Endothelial cell of umbilical vein (primary cell): ENCODE measurements at regions of chr17 and their contacts with region 1.

Region 1: DNA sequence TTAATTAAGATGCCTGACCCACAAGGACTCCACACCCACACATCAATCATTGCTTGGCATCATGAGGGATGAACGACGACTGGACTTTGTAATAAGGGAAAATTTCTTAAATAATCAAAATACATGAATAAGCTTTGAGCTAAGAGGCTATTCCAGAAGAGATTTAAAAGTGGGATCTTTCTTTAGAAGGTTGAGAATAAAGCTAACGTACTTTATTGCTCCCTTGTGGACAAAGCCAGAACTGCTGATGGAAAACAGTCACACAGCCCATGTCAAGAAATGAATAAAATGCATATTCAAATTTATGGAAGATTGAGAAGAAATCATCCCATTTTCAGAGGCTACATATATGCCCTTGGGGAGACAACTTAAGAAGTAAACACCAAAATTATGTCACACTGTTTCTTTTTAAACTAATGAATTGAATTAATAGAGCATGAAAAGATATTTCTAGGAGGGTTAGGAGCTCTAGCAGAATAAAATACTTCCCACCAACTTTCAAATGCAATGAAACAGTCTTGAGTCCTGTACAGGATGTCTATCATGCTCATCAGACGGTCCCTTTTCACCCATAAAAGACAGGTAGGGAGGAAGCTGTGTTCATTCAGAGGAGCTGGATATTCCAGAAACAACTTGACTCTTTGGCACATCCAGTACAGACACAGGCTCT is 60.2 kb upstream of the PHOSPHO1 start:
- DNase-seq: peak; percentile 65
- H3K4me3 ChIP-seq: no peak overlapping the region
- H3K27ac ChIP-seq: no peak overlapping the region
- H3K4me1 ChIP-seq: no peaks in the 10 kb centered on the region
- H3K27me3 ChIP-seq: no peaks in the 10 kb centered on the region
- CTCF ChIP-seq: peak; percentile 55 to 63
- POLR2A ChIP-seq: no peak

Region 2: DNA sequence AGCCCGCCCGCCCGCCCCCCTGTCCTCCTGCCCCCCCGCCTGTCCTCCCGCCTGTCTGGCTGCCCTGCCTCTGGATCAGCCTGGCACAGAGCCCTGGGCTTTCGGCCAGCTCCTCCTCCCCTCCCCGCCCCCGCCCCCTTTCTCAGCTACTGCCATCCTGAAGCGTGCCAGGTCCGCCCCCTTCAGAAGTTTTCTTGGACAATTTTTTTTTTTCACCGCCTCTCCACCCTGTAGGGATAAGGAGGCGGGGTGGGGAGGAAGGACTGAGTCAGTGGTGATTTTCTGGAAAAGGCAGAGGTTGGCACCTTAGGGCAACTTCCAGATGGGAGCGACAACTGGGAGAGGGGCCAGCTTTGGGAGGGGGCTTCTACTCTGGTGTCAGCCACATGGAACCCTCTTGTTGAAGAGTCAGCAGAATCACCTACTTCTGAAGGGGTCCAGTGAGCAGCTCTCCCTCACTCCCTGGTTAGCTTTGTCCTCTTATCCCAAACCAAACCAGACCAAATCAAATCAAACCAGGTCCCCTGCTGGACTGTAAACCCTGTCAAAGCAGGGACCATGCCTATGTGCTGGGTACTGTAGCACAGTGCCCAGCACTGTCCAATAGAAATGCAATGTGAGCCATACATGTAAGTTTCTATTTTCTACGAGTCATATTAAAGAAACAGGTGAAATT is 273.9 kb before region 1 on chr17:
- CTCF ChIA-PET with region 1: no interaction called
- POLR2A ChIA-PET with region 1: no interaction called
- dilution Hi-C with region 1: no loop called
- intact Hi-C with region 1: no loop called
- DNase-seq: peak; percentile 94
- H3K4me3 ChIP-seq: no peak overlapping the region
- H3K27ac ChIP-seq: peak overlapping the region; percentile 45
- H3K4me1 ChIP-seq: peaks cover 52% of the 10 kb centered on the region
- H3K27me3 ChIP-seq: no peaks in the 10 kb centered on the region
- CTCF ChIP-seq: no peak
- POLR2A ChIP-seq: no peak

Region 3: GRCh38 chr17:49180303-49180702 is 110.5 kb before region 1 on chr17:
- CTCF ChIA-PET with region 1: interaction called, 73 read pairs
- POLR2A ChIA-PET with region 1: no interaction called
- dilution Hi-C with region 1: no loop called
- intact Hi-C with region 1: loop called (anchors 1 kb)
- DNase-seq: peak; percentile 63
- H3K4me3 ChIP-seq: no peak overlapping the region
- H3K27ac ChIP-seq: no peak overlapping the region
- H3K4me1 ChIP-seq: no peaks in the 10 kb centered on the region
- H3K27me3 ChIP-seq: no peaks in the 10 kb centered on the region
- CTCF ChIP-seq: peak; percentile 90 to 96
- POLR2A ChIP-seq: no peak

Region 4: DNA sequence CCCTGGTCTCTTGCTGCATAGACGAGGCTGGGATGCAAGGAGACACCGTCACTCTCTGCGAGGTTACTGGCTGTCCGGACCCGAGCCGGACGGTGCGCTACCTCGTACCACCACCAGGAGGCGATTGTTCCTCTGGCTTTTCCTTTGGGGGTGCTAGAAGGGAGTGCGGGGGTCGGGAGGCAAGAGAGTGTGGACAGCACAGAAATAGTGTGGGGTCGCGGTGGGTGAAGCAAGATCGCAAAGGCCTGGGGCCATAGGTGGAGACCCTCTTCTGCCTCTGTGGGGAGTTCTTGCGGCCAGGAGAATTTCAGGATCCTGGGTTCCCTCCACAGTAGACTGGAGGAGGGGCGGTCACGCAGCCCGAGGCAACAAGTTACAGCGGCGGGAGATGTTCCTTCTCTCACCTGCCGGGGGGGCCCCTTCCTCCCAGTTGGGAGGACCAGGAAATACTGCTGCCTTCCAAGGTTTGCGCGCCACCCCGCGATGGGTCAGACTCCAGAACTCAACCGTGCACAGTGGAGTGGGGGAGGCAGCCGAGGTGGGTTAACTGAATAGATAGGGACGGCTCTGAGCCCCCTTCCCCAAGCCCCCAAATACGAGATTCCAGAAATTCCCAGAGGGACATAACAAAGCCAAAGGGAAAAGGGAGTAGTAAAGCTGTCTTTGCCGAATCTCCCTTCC is 67.2 kb before region 1 on chr17:
- CTCF ChIA-PET with region 1: interaction called, 140 read pairs
- POLR2A ChIA-PET with region 1: no interaction called
- dilution Hi-C with region 1: no loop called
- intact Hi-C with region 1: no loop called
- DNase-seq: no peak
- H3K4me3 ChIP-seq: no peak overlapping the region
- H3K27ac ChIP-seq: no peak overlapping the region
- H3K4me1 ChIP-seq: peaks cover 11% of the 10 kb centered on the region
- H3K27me3 ChIP-seq: peaks cover 16 to 22% of the 10 kb centered on the region in 2 experiments
- CTCF ChIP-seq: peak; percentile 78 to 83
- POLR2A ChIP-seq: no peak

Region 5: GRCh38 chr17:49244845-49245244 is 46.0 kb before region 1 on chr17:
- CTCF ChIA-PET with region 1: interaction called, 12 read pairs
- POLR2A ChIA-PET with region 1: no interaction called
- dilution Hi-C with region 1: no loop called
- intact Hi-C with region 1: no loop called
- DNase-seq: no peak
- H3K4me3 ChIP-seq: no peak overlapping the region
- H3K27ac ChIP-seq: no peak overlapping the region
- H3K4me1 ChIP-seq: no peaks in the 10 kb centered on the region
- H3K27me3 ChIP-seq: no peaks in the 10 kb centered on the region
- CTCF ChIP-seq: no peak
- POLR2A ChIP-seq: no peak

Region 6: DNA sequence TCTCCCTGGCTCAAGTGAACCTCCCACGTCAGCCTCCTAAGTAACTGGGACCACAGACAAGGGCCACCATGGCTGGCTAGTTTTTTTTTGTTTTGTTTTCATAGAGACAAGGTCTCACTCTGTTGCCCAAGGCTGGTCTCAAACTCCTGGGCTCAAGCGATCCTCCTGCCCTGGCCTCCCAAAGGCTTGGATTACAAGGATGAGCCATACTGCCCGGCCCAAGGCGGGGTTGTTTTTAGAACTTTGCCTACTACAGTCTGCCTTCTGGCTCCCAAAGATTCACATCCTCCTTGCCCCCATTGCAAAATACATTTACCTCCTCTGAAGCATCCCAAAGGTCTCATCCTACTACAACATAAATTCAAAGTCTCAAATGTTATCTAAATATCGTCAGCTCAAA is 10.8 kb before region 1 on chr17:
- CTCF ChIA-PET with region 1: interaction called, 12 read pairs
- POLR2A ChIA-PET with region 1: no interaction called
- dilution Hi-C with region 1: no loop called
- intact Hi-C with region 1: no loop called
- DNase-seq: no peak
- H3K4me3 ChIP-seq: no peak overlapping the region
- H3K27ac ChIP-seq: no peak overlapping the region
- H3K4me1 ChIP-seq: no peaks in the 10 kb centered on the region
- H3K27me3 ChIP-seq: no peaks in the 10 kb centered on the region
- CTCF ChIP-seq: no peak
- POLR2A ChIP-seq: no peak